Right ventricle myocardium superior (tissue), 1 donor: ENCODE measurements at regions of chr6 and their contacts with region 1.

Region 1: GRCh38 chr6:125584468-125585029 is 164.9 kb upstream of the HEY2 start:
- DNase-seq: peak; percentile 71
- ATAC-seq: peak; percentile 88

Region 2: GRCh38 chr6:125469915-125470314 is 114.6 kb before region 1 on chr6:
- intact Hi-C with region 1: no loop called
- DNase-seq: no peak
- ATAC-seq: no peak

Region 3: DNA sequence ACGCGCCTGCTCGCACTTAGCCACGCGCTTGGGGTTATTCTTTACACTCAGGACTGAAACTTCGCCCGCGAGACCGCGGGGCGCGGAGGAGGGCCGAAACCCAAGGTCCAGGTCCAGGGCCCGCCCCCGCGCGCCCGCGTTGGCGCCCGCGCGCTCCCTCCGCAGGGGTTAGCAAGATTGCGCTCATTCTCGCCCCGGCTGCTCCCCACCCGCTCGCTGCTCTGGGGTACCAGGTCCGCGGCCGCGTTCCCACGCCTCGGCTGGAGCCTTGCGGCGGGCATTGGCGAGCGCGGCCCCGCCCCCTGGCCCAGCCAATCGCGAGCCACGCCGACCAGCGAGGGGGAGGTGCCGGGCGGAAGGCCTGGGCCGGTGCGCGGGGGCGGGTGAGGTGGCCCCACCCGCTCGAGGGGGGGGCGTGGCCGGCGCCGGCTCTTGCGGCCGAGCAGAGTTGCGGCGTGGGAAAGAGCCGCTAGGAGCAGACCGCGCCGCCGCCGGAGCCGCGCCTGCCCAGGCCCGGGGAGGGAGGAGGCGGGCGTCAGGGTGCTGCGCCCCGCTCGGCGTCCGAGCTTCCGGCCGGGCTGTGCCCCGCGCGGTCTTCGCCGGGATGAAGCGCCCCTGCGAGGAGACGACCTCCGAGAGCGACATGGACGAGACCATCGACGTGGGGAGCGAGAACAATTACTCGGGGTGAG is 164.8 kb after region 1 on chr6 and contains the start of gene HEY2:
- intact Hi-C with region 1: loop called (anchors 5 kb)
- DNase-seq: peak; percentile 96
- ATAC-seq: peak; percentile 84
- total RNA-seq, gene HEY2: 60.6 TPM